ENCODE measurements at regions of chr7 and their contacts with region 1.

Region 1: GRCh38 chr7:143240291-143241168 is 18.7 kb downstream of the TAS2R40 start:
- DNase-seq: peak; percentile 77
- H3K4me3 Mint-ChIP-seq: no peak overlapping the region
- H3K27ac Mint-ChIP-seq: peak overlapping the region; percentile 33
- H3K4me1 Mint-ChIP-seq: peaks cover 52% of the 10 kb centered on the region
- H3K27me3 Mint-ChIP-seq: peaks cover 16% of the 10 kb centered on the region

Region 2: DNA sequence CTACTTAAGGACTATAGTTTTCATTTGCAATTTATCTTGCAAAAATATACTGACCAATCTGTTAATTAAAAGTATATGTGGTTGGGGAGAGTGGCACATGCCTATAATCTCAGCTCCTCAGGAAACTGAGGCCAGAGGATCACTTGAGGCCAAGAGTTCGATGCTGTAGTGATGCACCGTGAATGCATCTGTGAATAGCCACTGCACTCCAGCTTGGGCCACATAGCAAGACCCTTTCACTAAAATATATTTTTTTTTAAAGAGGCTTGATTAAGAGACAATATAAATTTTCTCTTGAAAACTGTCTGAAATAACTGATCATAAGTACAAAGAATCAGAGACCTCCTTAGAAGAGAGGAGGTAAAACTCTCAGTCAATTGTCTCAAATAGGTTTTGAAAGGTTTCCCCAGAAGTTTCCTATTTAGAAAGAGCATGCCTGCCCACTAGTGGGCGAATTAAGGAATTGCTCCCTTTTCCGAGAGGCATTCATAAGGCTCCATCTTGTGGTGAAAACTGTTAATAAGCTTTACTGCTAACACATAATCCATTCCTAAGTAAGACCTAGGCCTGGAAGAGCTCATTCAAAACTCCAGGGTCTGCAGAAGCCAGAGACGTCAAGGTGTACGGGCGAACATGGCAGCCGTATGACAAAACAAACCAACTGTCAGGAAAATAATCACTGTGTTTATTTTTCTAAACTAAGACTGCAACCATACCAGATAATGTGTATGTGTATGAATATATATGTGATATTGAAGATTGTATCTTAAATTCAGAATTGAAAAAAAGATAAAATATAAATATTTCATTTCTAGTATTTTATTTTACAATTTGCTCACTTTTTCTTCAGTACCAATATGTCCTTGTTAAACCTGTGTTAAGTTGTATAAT is 25.5 kb before region 1 on chr7:
- CTCF ChIA-PET with region 1: interaction called, 15 read pairs
- POLR2A ChIA-PET with region 1: no interaction called
- DNase-seq: peak; percentile 70
- H3K4me3 Mint-ChIP-seq: no peak overlapping the region
- H3K27ac Mint-ChIP-seq: no peak overlapping the region
- H3K4me1 Mint-ChIP-seq: no peaks in the 10 kb centered on the region
- H3K27me3 Mint-ChIP-seq: peaks cover 9% of the 10 kb centered on the region

Region 3: DNA sequence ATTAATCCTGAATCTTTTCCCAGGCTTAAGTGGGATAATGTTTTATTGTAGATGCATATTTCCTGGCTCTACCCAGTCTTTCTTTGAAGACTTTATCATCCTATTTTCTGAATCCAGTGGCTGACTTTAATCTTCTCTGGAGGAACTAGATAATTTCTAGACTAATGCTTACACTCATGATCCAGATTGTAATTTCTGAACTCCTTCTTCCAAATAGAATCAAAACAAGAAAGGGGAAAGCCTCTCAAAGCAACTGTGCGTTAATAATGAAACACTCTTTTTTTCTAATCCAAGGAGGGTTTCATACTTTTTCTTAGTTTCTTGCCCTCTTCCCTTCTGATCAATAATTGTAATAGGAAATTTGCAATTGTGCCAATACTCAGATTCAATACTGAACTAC is 30.7 kb after region 1 on chr7:
- CTCF ChIA-PET with region 1: interaction called, 178 read pairs
- POLR2A ChIA-PET with region 1: interaction called, 51 read pairs
- DNase-seq: no peak
- H3K4me3 Mint-ChIP-seq: no peak overlapping the region
- H3K27ac Mint-ChIP-seq: no peak overlapping the region
- H3K4me1 Mint-ChIP-seq: peaks cover 40% of the 10 kb centered on the region
- H3K27me3 Mint-ChIP-seq: no peaks in the 10 kb centered on the region

Region 4: DNA sequence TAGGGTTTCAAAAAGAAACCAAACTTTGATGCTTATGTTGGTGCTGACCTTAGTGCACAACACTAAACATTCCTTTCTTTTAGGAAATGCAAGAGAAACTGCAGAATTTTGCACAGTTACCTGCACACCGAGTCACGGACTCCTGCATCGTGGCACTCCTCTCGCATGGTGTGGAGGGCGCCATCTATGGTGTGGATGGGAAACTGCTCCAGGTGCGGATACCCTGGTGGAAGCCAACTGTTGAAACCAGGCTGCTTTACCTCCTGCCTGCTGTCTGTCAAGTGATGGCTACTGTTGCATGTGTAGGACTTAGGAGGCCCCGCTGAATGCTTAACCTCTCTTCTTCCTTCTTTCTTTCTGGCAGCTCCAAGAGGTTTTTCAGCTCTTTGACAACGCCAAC is 59.3 kb after region 1 on chr7:
- CTCF ChIA-PET with region 1: interaction called, 250 read pairs
- POLR2A ChIA-PET with region 1: interaction called, 11 read pairs
- DNase-seq: peak; percentile 67
- H3K4me3 Mint-ChIP-seq: no peak overlapping the region
- H3K27ac Mint-ChIP-seq: peak overlapping the region; percentile 47
- H3K4me1 Mint-ChIP-seq: peaks cover 72% of the 10 kb centered on the region
- H3K27me3 Mint-ChIP-seq: no peaks in the 10 kb centered on the region

Region 5: GRCh38 chr7:143345428-143345900 is 104.9 kb after region 1 on chr7:
- CTCF ChIA-PET with region 1: interaction called, 26 read pairs
- POLR2A ChIA-PET with region 1: no interaction called
- DNase-seq: peak; percentile 75
- H3K4me3 Mint-ChIP-seq: peak overlapping the region; percentile 59
- H3K27ac Mint-ChIP-seq: no peak overlapping the region
- H3K4me1 Mint-ChIP-seq: peaks cover 11% of the 10 kb centered on the region
- H3K27me3 Mint-ChIP-seq: peaks cover 33% of the 10 kb centered on the region

Region 6: DNA sequence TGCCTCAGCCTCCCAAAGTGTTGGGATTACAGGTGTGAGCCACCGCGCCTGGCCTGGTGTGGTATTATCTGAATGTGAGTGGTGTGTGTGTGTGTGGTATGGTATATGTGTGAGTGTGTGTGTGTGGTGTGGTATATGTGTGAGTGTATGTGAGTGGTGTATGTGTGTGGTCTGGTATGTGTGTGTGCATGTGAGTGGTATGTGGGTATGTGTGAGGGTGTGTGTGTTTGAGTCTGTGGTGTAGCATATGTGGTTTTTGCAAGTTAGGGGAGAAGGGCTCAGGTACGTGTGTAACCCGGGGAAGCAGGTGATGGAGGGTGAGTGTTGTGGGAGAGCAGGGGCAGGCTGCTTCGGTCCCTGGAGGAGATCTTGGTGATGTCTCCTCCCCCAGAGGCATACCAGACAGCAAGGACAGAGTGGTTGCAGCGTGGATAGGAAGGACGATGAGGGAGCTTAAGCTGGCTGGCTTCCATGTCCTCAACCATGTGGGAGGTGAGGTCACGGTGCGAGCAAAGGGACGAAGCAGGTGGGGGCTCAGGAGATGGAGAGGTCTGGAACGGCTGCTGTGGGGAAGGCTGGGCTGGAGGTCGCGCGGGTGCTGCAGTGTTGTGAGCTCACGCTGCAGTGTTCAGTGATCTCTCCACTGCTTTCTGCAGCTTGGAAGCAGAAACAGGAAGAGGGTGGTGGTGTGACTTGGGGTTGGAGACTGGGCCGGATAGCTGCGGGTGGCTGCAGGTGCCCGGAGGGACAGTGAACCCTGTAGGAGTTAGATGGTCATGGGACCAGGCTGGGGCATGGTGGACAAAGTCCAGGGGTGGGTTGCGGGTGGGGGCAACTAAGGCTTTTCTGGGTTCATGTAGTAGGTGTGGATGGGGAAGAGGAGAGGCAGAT is 145.6 kb after region 1 on chr7:
- CTCF ChIA-PET with region 1: interaction called, 20 read pairs
- POLR2A ChIA-PET with region 1: interaction called, 14 read pairs
- DNase-seq: peak; percentile 64
- H3K4me3 Mint-ChIP-seq: no peak overlapping the region
- H3K27ac Mint-ChIP-seq: no peak overlapping the region
- H3K4me1 Mint-ChIP-seq: peaks cover 21% of the 10 kb centered on the region
- H3K27me3 Mint-ChIP-seq: no peaks in the 10 kb centered on the region

Region 7: GRCh38 chr7:143422033-143422432 is 181.5 kb after region 1 on chr7:
- CTCF ChIA-PET with region 1: interaction called, 57 read pairs
- POLR2A ChIA-PET with region 1: no interaction called
- DNase-seq: no peak
- H3K4me3 Mint-ChIP-seq: no peak overlapping the region
- H3K27ac Mint-ChIP-seq: no peak overlapping the region
- H3K4me1 Mint-ChIP-seq: peaks cover 7% of the 10 kb centered on the region
- H3K27me3 Mint-ChIP-seq: peaks cover 3% of the 10 kb centered on the region